ENCODE measurements at regions of chr17 and their contacts with region 1.

Region 1: GRCh38 chr17:81601525-81602120 is 35.3 kb downstream of the NPLOC4 start:
- DNase-seq: no peak
- H3K4me3 ChIP-seq: no peak overlapping the region
- H3K27ac ChIP-seq: peak overlapping the region in 2 of 4 donors; percentile 8 to 16
- H3K4me1 ChIP-seq: peaks cover 10 to 19% (median 17%) of the 10 kb centered on the region in 4 donors
- H3K27me3 ChIP-seq: no peaks in the 10 kb centered on the region
- CTCF ChIP-seq: peak; percentile 64 to 84 (median 70)
- EP300 ChIP-seq: no peak
- POLR2A ChIP-seq: no peak

Region 2: GRCh38 chr17:81253358-81254131 is 348.1 kb before region 1 on chr17:
- intact Hi-C with region 1: loop called (anchors 5 kb)
- DNase-seq: no peak
- H3K4me3 ChIP-seq: no peak overlapping the region
- H3K27ac ChIP-seq: peak overlapping the region; percentile 85 to 91 (median 88)
- H3K4me1 ChIP-seq: peaks cover 14 to 57% (median 47%) of the 10 kb centered on the region in 4 donors
- H3K27me3 ChIP-seq: no peaks in the 10 kb centered on the region
- CTCF ChIP-seq: peak; percentile 88 to 92 (median 90)
- EP300 ChIP-seq: no peak
- POLR2A ChIP-seq: no peak

Region 3: GRCh38 chr17:81401723-81402529 is 199.7 kb before region 1 on chr17:
- intact Hi-C with region 1: no loop called
- DNase-seq: no peak
- H3K4me3 ChIP-seq: peak overlapping the region; percentile 79 to 95 (median 90)
- H3K27ac ChIP-seq: peak overlapping the region; percentile 96 to 100 (median 99)
- H3K4me1 ChIP-seq: peaks cover 71 to 85% (median 84%) of the 10 kb centered on the region in 4 donors
- H3K27me3 ChIP-seq: no peaks in the 10 kb centered on the region
- CTCF ChIP-seq: peak; percentile 32 to 35 (median 34)
- EP300 ChIP-seq: no peak
- POLR2A ChIP-seq: no peak

Measured in esophagus muscularis mucosa (tissue), 4 donors.